ENCODE measurements at regions of chr2 and their contacts with region 1.

Region 1: GRCh38 chr2:150624001-150624401 is 136.5 kb upstream of the RND3 start:
- DNase-seq: peak; percentile 89
- H3K4me3 ChIP-seq: no peak overlapping the region
- H3K27ac ChIP-seq: peak overlapping the region; percentile 68
- H3K4me1 ChIP-seq: peaks cover 49% of the 10 kb centered on the region
- H3K27me3 ChIP-seq: no peaks in the 10 kb centered on the region
- CTCF ChIP-seq: no peak
- POLR2A ChIP-seq: no peak

Region 2: GRCh38 chr2:150663143-150663542 is 39.1 kb after region 1 on chr2:
- CTCF ChIA-PET with region 1: no interaction called
- POLR2A ChIA-PET with region 1: no interaction called
- dilution Hi-C with region 1: no loop called
- intact Hi-C with region 1: loop called (anchors 2 kb)
- DNase-seq: peak; percentile 33
- H3K4me3 ChIP-seq: no peak overlapping the region
- H3K27ac ChIP-seq: peak overlapping the region; percentile 17
- H3K4me1 ChIP-seq: peaks cover 11% of the 10 kb centered on the region
- H3K27me3 ChIP-seq: no peaks in the 10 kb centered on the region
- CTCF ChIP-seq: no peak
- POLR2A ChIP-seq: no peak

Region 3: DNA sequence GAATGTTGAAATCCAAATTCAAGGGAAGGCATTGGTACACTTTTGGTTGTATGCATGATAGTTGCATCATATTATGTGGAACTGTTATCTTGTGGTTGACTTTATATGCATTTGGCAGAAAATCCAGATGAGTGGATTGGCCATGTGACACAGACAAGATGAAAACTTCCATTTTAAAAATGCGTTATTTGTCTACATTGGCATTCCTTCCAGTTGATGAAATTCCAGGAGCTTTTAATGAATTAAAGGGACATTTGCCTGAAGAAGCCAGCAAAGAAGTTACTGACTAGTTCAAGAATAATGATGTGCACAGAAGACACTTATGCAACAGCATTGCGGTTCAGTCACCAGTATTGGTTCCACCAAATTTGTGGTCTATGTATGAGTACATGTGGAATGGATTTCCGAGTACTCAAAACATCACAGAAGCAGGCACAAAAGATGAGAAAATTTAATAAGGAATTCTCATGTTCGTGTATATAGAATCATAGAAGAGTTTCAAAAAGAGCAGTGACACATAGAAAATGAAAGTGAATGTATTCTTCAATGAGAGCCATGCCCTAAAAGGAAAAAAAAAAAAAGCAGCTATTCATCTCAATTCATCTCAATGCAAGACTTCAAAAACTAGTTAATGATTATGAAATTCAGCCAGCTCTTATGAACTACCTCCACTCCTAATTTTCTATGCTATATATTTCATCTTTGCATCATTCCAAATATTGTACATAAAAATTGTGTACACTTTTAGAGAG is 405.6 kb after region 1 on chr2:
- CTCF ChIA-PET with region 1: no interaction called
- POLR2A ChIA-PET with region 1: no interaction called
- dilution Hi-C with region 1: no loop called
- intact Hi-C with region 1: no loop called
- DNase-seq: no peak
- H3K4me3 ChIP-seq: no peak overlapping the region
- H3K27ac ChIP-seq: no peak overlapping the region
- H3K4me1 ChIP-seq: no peaks in the 10 kb centered on the region
- H3K27me3 ChIP-seq: peaks cover 0 to 2% of the 10 kb centered on the region in 2 experiments
- CTCF ChIP-seq: no peak
- POLR2A ChIP-seq: no peak

Measured in endothelial cell of umbilical vein (primary cell).